ENCODE measurements at regions of chr12 and their contacts with region 1.

Region 1: GRCh38 chr12:65171870-65172269 is 2.5 kb downstream of the LEMD3 start:
- DNase-seq: no peak
- H3K4me3 ChIP-seq: peak overlapping the region; percentile 89
- CTCF ChIP-seq: no peak

Region 2: DNA sequence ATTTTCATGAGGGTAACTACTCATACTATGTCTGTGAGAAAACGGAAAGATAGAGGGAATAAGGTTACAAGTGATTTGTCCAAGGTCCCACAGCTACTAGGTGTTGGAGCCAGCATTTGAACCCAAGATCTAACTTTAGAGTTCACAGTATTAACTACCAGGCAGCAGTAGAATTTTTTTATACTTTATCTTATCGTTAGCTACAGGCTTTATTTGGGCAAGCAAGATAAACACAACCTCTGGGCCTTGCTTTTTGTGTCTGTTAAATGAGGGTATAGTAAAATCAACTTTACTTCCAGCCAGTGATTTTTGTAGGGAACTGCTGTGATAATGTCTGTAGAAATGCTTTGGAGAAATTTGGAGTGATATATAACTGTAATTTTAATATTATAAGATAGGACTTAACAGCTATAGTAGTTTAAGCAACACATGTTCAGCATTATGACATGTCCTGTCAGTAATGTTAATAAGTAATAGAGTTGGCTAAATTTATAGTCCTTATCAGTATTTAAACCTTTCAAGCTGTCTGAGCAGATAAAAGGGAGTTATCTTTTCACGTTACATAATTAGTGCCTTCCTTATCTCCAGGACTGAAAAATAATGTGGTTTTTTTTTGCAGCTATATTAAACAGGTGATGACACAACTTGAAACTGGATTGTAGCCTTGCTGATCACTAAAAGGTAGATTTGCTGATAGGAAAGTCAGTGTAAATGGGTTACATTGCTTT is 10.3 kb after region 1 on chr12:
- CTCF ChIA-PET with region 1: interaction called, 11 read pairs
- POLR2A ChIA-PET with region 1: no interaction called
- DNase-seq: no peak
- H3K4me3 ChIP-seq: no peak overlapping the region
- CTCF ChIP-seq: no peak